ENCODE measurements at regions of chr3 and their contacts with region 1.

Region 1: GRCh38 chr3:129249276-129250065 is at the start of gene COPG1:
- DNase-seq: peak; percentile 88
- H3K4me3 Mint-ChIP-seq: peak within 1 kb of the TSS; percentile 98
- H3K27ac Mint-ChIP-seq: peak within 1 kb of the TSS; percentile 98
- H3K4me1 Mint-ChIP-seq: peaks cover 61% of the 10 kb centered on the region
- H3K27me3 Mint-ChIP-seq: no peaks in the 10 kb centered on the region
- total RNA-seq, gene COPG1: 157 and 160 TPM in 2 replicates

Region 2: GRCh38 chr3:128011140-128011539 is 1238.3 kb before region 1 on chr3:
- intact Hi-C with region 1: no loop called
- DNase-seq: no peak
- H3K4me3 Mint-ChIP-seq: no peak overlapping the region
- H3K27ac Mint-ChIP-seq: no peak overlapping the region
- H3K4me1 Mint-ChIP-seq: peaks cover 6% of the 10 kb centered on the region
- H3K27me3 Mint-ChIP-seq: peaks cover 6% of the 10 kb centered on the region

Region 3: GRCh38 chr3:128993461-128994173 is 255.9 kb before region 1 on chr3 and contains the start of gene CFAP92:
- intact Hi-C with region 1: loop called (anchors 2 kb)
- DNase-seq: peak; percentile 90
- H3K4me3 Mint-ChIP-seq: peak within 1 kb of the TSS; percentile 72
- H3K27ac Mint-ChIP-seq: peak within 1 kb of the TSS; percentile 43
- H3K4me1 Mint-ChIP-seq: peaks cover 36% of the 10 kb centered on the region
- H3K27me3 Mint-ChIP-seq: peaks cover 14% of the 10 kb centered on the region
- total RNA-seq, gene CFAP92: 0.13 and 0.29 TPM in 2 replicates

Region 4: GRCh38 chr3:129052675-129053074 is 196.8 kb before region 1 on chr3:
- intact Hi-C with region 1: loop called (anchors 1 kb)
- DNase-seq: no peak
- H3K4me3 Mint-ChIP-seq: no peak overlapping the region
- H3K27ac Mint-ChIP-seq: no peak overlapping the region
- H3K4me1 Mint-ChIP-seq: peaks cover 9% of the 10 kb centered on the region
- H3K27me3 Mint-ChIP-seq: peaks cover 14% of the 10 kb centered on the region

Region 5: GRCh38 chr3:129183569-129184395 is 65.7 kb before region 1 on chr3 and contains the start of gene CNBP:
- intact Hi-C with region 1: loop called (anchors 1 kb)
- DNase-seq: peak; percentile 91
- H3K4me3 Mint-ChIP-seq: peak within 1 kb of the TSS; percentile 97
- H3K27ac Mint-ChIP-seq: peak within 1 kb of the TSS; percentile 98
- H3K4me1 Mint-ChIP-seq: peaks cover 35% of the 10 kb centered on the region
- H3K27me3 Mint-ChIP-seq: no peaks in the 10 kb centered on the region
- total RNA-seq, gene CNBP: 408 and 425 TPM in 2 replicates

Region 6: DNA sequence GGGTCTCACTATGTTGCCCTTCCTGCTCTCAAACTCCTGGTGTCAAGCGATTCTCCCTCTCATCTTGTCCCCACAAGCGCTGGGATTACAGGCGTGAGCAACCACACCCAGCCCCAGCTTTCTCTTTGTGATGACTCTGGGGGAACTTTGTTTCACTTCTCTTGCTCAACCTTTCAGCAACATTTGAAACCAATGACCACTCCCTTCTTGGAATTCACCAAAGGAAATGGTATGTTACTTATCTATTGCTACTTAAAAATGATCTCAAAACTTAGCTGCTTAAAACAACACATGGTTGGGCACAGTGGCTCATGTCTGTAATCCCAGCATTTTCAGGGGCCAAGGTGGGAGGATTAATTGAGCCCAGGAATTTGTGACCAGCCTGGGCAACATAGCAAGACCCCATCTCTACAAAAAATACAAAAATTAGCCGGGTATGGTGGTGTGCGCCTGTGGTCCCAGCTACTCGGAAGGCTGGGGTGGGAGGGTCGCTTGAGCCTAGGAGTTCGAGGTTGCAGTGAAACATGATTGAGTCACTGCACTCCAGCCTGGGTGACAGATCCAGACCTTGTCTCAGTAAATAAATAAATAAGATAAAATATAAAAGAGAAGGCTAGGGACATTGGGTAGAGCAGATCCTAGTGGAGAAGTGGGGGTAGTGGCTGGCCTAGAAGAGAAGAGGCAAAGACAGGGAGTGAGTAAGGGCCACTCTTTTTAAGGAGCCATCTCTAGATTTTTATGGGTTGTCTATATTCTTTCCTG is 10.3 kb before region 1 on chr3:
- intact Hi-C with region 1: loop called (anchors 1 kb)
- DNase-seq: peak; percentile 58
- H3K4me3 Mint-ChIP-seq: peak overlapping the region; percentile 41
- H3K27ac Mint-ChIP-seq: peak overlapping the region; percentile 90
- H3K4me1 Mint-ChIP-seq: peaks cover 43% of the 10 kb centered on the region
- H3K27me3 Mint-ChIP-seq: no peaks in the 10 kb centered on the region

Region 7: DNA sequence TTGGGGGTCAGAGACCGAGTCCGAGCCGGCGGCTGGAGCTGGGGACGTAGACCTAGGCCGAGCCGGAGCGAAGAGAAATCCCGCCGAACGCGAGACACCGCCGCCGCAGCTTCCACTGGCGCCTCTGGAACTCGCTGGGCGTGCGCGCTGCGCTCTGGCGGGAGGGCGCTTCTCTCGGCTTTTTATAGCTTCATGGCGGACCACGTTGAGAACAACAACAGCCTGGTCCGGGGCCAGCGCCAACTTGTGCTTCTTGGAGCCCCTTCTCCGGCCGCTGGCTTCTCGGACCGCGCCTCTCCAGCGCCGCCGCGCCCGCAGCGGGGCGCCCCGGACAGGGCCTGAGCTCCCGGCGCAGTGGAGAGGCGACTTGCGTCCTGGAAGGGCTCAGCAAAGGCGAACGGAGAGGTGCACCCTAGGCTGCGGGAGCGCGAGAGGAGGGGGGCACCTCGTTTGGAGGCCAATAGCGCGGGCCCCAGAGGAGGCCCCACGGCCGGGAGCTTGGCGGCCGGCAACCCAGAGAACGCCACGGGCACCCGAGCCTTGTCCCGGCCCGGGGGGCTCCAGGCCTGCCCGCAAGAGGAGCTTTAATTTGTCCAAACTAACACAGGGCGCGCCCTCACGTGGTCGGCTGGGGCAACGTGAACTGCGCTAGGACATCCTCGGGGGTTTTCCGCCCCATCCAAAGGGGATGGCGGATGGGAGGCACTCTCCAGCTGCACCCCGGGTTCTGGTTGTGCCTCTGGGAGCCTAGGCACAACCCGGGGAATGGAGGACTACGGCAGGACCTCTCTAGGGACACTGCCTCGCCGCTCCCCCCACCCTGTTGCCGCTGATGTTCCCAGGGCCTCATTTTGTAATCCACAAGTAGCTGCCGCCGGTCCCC is 66.9 kb after region 1 on chr3:
- intact Hi-C with region 1: loop called (anchors 1 kb)
- DNase-seq: peak; percentile 88
- H3K4me3 Mint-ChIP-seq: peak overlapping the region; percentile 81
- H3K27ac Mint-ChIP-seq: peak overlapping the region; percentile 80
- H3K4me1 Mint-ChIP-seq: peaks cover 32% of the 10 kb centered on the region
- H3K27me3 Mint-ChIP-seq: no peaks in the 10 kb centered on the region

Measured in activated T-helper 1 cell treated with anti-CD3 and anti-CD28 coated beads, Interleukin-12 subunit alpha, Interleukin-12 subunit beta, Interleukin-2, Interleukin-4 antibody, amounts not matched to agents 30 ng/mL and 10 ng/mL and 1 ng/mL, durations not matched to agents 14 hours and 24 hours and 36 hours (primary cell).